Activated T-helper 2 cell treated with anti-CD3 and anti-CD28 coated beads, Interferon-gamma antibody, Interleukin-2, Interleukin-4, amounts not matched to agents 10 μg/mL and 5 μg/mL and 100 μg/mL, durations not matched to agents 14 hours and 24 hours and 36 hours (primary cell): ENCODE measurements at regions of chr3 and their contacts with region 1.

Region 1: DNA sequence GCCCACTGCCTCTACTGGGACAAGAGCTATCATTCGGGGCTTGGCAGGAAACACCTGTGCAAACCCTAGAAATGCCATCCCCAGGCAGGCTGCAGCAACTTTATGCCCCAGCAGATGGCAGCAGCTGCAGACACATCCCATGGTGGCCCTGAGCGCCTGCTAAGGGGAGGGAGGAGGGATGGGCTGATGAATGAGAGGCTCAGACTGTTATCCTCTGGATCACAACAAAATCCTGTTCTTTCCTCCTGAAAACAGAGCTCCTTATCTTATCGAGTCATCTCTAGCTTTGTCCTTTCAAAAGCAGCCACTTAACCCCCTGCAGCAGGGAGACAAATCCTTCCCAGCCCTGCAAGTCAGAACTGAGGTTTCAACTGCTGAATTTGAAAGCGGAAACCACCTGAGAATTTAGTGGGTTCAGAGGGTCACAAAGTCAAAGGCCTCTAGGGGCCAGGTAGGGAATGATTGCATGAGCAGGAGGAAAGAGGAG is 90.6 kb upstream of the PROK2 start:
- DNase-seq: peak; percentile 63
- H3K4me3 Mint-ChIP-seq: no peak overlapping the region
- H3K27ac Mint-ChIP-seq: peak overlapping the region; percentile 17
- H3K4me1 Mint-ChIP-seq: peaks cover 29% of the 10 kb centered on the region
- H3K27me3 Mint-ChIP-seq: peaks cover 4% of the 10 kb centered on the region

Region 2: GRCh38 chr3:71905426-71905825 is 29.9 kb after region 1 on chr3:
- intact Hi-C with region 1: no loop called
- DNase-seq: no peak
- H3K4me3 Mint-ChIP-seq: no peak overlapping the region
- H3K27ac Mint-ChIP-seq: no peak overlapping the region
- H3K4me1 Mint-ChIP-seq: peaks cover 10% of the 10 kb centered on the region
- H3K27me3 Mint-ChIP-seq: peaks cover 9% of the 10 kb centered on the region

Region 3: GRCh38 chr3:72265256-72266015 is 389.9 kb after region 1 on chr3:
- intact Hi-C with region 1: loop called (anchors 5 kb)
- DNase-seq: no peak
- H3K4me3 Mint-ChIP-seq: no peak overlapping the region
- H3K27ac Mint-ChIP-seq: peak overlapping the region; percentile 56
- H3K4me1 Mint-ChIP-seq: peaks cover 42% of the 10 kb centered on the region
- H3K27me3 Mint-ChIP-seq: no peaks in the 10 kb centered on the region

Region 4: GRCh38 chr3:72447059-72447946 is 571.8 kb after region 1 on chr3:
- intact Hi-C with region 1: loop called (anchors 2 kb)
- DNase-seq: peak; percentile 92
- H3K4me3 Mint-ChIP-seq: peak overlapping the region; percentile 66
- H3K27ac Mint-ChIP-seq: peak overlapping the region; percentile 60
- H3K4me1 Mint-ChIP-seq: peaks cover 52% of the 10 kb centered on the region
- H3K27me3 Mint-ChIP-seq: no peaks in the 10 kb centered on the region

Region 5: GRCh38 chr3:72665701-72666443 is 790.4 kb after region 1 on chr3:
- intact Hi-C with region 1: loop called (anchors 10 kb)
- DNase-seq: peak; percentile 19
- H3K4me3 Mint-ChIP-seq: no peak overlapping the region
- H3K27ac Mint-ChIP-seq: no peak overlapping the region
- H3K4me1 Mint-ChIP-seq: no peaks in the 10 kb centered on the region
- H3K27me3 Mint-ChIP-seq: no peaks in the 10 kb centered on the region